HepG2 (cell line): ENCODE measurements at regions of chr16 and their contacts with region 1.

Region 1: DNA sequence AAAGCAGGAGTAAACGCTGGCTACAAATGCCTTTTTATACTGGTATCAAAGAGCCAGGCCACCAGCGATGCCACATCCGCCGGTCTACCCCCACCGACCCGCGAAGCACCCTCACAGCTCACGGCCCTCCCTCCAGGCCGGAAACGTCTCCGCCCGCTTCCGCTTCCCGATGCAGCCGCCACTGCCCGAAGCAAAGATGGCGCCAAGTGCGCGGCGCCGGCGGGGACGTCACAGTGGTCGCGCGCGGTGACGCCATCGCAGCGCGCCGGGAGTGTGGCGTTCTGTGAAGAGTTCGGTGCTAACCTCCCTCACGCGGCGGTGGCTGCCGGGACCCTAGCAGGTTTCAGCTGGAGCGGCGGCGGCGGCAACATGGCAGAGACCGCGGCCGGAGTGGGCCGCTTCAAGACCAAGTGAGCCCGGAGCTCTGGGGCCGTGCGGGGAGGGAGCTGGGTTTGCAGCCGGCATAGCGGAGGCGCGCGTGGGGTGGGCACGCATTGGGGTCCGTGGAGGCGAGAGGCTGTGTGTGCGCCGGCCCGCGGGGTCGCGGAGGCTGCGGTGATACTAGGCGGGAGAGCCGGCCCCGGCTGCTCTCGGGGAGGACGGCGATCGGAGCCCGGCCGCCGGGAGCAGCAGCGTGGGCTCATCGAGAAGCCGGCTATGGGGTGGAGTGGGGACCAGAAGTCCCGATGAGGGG is at the start of gene TBL3:
- DNase-seq: peak; percentile 87
- ATAC-seq: peak; percentile 89
- H3K4me3 ChIP-seq: peak within 1 kb of the TSS; percentile 74 to 99 (median 84)
- H3K27ac ChIP-seq: peak within 1 kb of the TSS; percentile 75
- H3K4me1 ChIP-seq: peaks cover 21% of the 10 kb centered on the region
- H3K27me3 ChIP-seq: no peaks in the 10 kb centered on the region
- CTCF ChIP-seq: peak; percentile 45
- EP300 ChIP-seq: 0 out of 4 replicates have a peak, but pooled peaks of 1 of the 2 experiments have one; percentile 49
- POLR2A ChIP-seq: peak; percentile 84 to 92
- RAD21 ChIP-seq: peak; percentile 15; the same call in 1 of the 2 replicates
- total RNA-seq, gene TBL3: 31.2 and 38.0 TPM in 2 replicates

Region 2: DNA sequence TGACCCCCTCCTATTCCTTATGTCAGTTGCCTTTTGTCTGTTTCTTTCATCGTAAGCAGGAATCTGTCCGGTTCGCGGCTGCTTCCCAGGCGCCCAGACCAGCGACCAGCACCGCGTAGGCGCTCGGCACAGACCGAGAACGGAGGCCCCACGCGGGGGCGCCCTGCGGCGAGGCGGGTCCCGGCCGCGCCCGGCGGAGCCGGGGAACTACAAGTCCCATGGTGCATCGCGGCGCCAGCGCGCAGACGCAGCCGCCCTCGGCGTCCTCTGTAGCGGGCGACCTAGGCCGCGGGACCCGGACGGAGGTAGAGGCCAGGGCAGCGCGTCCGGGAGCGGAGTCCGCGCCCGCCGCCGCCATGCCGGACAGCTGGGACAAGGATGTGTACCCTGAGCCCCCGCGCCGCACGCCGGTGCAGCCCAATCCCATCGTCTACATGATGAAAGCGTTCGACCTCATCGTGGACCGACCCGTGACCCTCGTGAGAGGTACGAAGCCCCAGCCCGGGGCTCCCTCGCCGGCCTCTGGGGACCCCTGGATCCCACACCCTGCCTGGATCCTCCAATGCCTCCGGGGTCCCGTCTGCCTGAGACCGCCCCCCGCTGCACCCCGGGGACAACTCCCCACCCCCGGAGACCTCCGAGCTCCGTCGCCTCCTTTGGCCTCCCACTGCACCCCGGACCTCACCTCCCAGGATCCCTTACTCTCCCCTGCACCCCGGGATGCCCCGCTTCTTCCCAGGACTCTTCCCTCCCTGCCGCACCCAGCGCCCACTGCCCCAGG is 12.5 kb before region 1 on chr16 and contains the start of gene NDUFB10:
- CTCF ChIA-PET with region 1: no interaction called
- POLR2A ChIA-PET with region 1: interaction called, 26 read pairs
- in situ Hi-C with region 1: no loop called
- intact Hi-C with region 1: no loop called
- DNase-seq: peak; percentile 80
- ATAC-seq: peak; percentile 74
- H3K4me3 ChIP-seq: peak within 1 kb of the TSS; percentile 81 to 98 (median 94)
- H3K27ac ChIP-seq: peak within 1 kb of the TSS; percentile 80
- H3K4me1 ChIP-seq: peaks cover 51% of the 10 kb centered on the region
- H3K27me3 ChIP-seq: peaks cover 0 to 5% of the 10 kb centered on the region in 2 experiments; a peak in 3 of 5 replicates
- CTCF ChIP-seq: peak; percentile 82
- EP300 ChIP-seq: no peak
- POLR2A ChIP-seq: peak; percentile 90 to 99
- RAD21 ChIP-seq: peak; percentile 80
- total RNA-seq, gene NDUFB10: 143 and 157 TPM in 2 replicates

Region 3: GRCh38 chr16:1983544-1984346 is 11.8 kb after region 1 on chr16 and contains the start of gene GFER:
- CTCF ChIA-PET with region 1: no interaction called
- POLR2A ChIA-PET with region 1: interaction called, 12 read pairs
- in situ Hi-C with region 1: no loop called
- intact Hi-C with region 1: no loop called
- DNase-seq: peak; percentile 81
- ATAC-seq: peak; percentile 82
- H3K4me3 ChIP-seq: peak within 1 kb of the TSS; percentile 81 to 93 (median 84)
- H3K27ac ChIP-seq: peak within 1 kb of the TSS; percentile 97
- H3K4me1 ChIP-seq: peaks cover 54% of the 10 kb centered on the region
- H3K27me3 ChIP-seq: no peaks in the 10 kb centered on the region
- CTCF ChIP-seq: peak; percentile 72
- EP300 ChIP-seq: peak; percentile 9 to 38; a peak in 2 of 4 replicates
- POLR2A ChIP-seq: peak; percentile 58 to 63
- RAD21 ChIP-seq: 0 out of 2 replicates have a peak, but pooled peaks have one; percentile 16
- total RNA-seq, gene GFER: 68.3 and 71.7 TPM in 2 replicates

Region 4: DNA sequence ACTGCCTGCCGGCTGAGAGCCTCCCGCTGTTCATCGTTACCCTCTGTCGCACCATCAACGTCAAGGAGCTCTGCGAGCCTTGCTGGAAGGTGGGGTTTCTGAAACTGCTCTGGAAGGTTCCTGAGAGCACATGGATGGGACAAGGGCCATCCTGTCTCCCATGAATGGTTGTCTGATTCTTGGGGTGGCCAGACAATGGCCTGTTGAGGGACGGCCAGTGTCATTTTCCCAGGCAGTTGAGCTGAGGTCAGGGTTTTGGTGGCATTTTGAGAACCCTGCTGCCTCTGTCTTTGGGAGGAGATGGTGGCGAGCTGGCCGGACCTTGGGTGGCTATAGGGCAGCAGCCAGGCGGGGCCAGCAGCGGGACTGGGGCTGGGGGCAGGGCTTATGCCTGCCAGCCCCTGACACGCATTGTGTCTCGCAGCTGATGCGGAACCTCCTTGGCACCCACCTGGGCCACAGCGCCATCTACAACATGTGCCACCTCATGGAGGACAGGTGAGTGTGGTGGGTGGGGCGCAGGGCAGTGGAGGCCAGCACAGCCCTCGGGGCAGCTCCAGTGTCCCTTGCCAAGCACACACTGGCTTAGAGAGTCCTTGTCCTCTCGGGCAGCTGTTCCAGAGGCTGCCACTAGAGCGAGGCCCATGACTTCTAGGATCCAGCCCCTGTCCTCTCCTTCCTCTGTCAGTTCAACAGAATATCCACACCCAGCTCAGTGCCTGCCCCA is 84.9 kb after region 1 on chr16:
- CTCF ChIA-PET with region 1: no interaction called
- POLR2A ChIA-PET with region 1: no interaction called
- in situ Hi-C with region 1: no loop called
- intact Hi-C with region 1: no loop called
- DNase-seq: no peak
- ATAC-seq: peak; percentile 79
- H3K4me3 ChIP-seq: no peak overlapping the region
- H3K27ac ChIP-seq: no peak overlapping the region
- H3K4me1 ChIP-seq: no peaks in the 10 kb centered on the region
- H3K27me3 ChIP-seq: no peaks in the 10 kb centered on the region
- CTCF ChIP-seq: peak; percentile 28; the same call in 1 of the 2 replicates
- EP300 ChIP-seq: no peak
- POLR2A ChIP-seq: no peak
- RAD21 ChIP-seq: no peak